CD4-positive, alpha-beta T cell (primary cell): ENCODE measurements at regions of chr3 and their contacts with region 1.

Region 1: DNA sequence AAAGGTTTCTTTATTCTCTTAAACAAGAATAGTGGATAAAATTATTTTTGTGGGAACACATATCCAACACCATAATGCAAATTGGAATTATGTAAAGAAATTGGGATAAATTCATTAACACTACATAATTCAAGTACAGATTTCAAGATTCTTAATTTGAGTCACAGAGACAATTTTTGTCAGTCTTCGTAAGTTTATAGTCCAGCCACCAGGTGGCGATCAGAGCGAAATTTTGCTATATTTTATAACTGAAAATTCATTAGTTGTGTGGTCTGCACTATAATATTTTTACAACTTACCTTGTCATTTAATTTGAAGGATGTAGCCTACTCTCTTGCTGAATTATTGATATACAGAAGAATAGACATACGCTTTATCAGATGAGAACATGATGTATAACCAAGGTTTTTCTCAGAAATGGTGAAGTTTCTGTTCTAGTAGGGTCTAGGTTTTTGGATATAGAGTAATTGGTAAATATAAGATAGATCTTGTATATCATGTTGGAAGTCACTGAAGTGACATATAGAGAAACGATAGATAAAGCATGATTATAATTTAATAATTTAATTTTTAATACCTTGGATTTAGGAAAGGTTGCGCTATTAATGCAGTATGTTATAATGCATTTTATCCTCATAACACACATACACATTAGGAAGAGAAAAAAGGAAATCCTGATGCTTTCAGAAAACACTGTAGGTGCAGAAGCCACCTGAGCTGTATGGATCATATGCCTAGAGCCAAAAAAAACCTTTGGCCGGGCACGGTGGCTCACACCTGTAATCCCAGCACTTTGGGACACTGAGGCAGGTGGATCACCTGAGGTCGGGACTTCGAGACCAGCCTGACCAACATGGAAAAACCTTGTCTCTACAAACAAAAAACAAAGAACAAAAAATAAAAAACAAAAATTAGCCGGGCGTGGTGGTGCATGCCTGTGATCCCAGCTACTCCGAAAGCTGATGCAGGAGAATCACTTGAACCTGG is 31.7 kb downstream of the PLSCR4 start:
- DNase-seq: peak; percentile 6 to 57 (median 16)
- ATAC-seq: no peak
- H3K4me3 ChIP-seq: no peak overlapping the region
- H3K4me3 Mint-ChIP-seq: no peak overlapping the region
- H3K27ac ChIP-seq: no peak overlapping the region
- H3K27ac Mint-ChIP-seq: no peak overlapping the region
- H3K4me1 ChIP-seq: no peaks in the 10 kb centered on the region
- H3K4me1 Mint-ChIP-seq: no peaks in the 10 kb centered on the region
- H3K27me3 ChIP-seq: no peaks in the 10 kb centered on the region
- H3K27me3 Mint-ChIP-seq: no peaks in the 10 kb centered on the region
- CTCF ChIP-seq: peak; percentile 78

Region 2: GRCh38 chr3:146233487-146233886 is 14.3 kb after region 1 on chr3:
- CTCF ChIA-PET with region 1: no interaction called
- POLR2A ChIA-PET with region 1: no interaction called
- intact Hi-C with region 1: no loop called
- DNase-seq: no peak
- ATAC-seq: no peak
- H3K4me3 ChIP-seq: no peak overlapping the region
- H3K4me3 Mint-ChIP-seq: no peak overlapping the region
- H3K27ac ChIP-seq: no peak overlapping the region
- H3K27ac Mint-ChIP-seq: no peak overlapping the region
- H3K4me1 ChIP-seq: no peaks in the 10 kb centered on the region
- H3K4me1 Mint-ChIP-seq: no peaks in the 10 kb centered on the region
- H3K27me3 ChIP-seq: no peaks in the 10 kb centered on the region
- H3K27me3 Mint-ChIP-seq: peaks cover 5% of the 10 kb centered on the region
- CTCF ChIP-seq: no peak

Region 3: GRCh38 chr3:146640955-146641867 is 422.0 kb after region 1 on chr3:
- CTCF ChIA-PET with region 1: no interaction called
- POLR2A ChIA-PET with region 1: no interaction called
- intact Hi-C with region 1: loop called in 1 of 2 experiments (anchors 5 kb)
- DNase-seq: peak in 3 of 14 experiments; percentile 25 to 31 (median 27)
- ATAC-seq: peak; percentile 39
- H3K4me3 ChIP-seq: no peak overlapping the region
- H3K4me3 Mint-ChIP-seq: no peak overlapping the region
- H3K27ac ChIP-seq: no peak overlapping the region
- H3K27ac Mint-ChIP-seq: no peak overlapping the region
- H3K4me1 ChIP-seq: no peaks in the 10 kb centered on the region
- H3K4me1 Mint-ChIP-seq: no peaks in the 10 kb centered on the region
- H3K27me3 ChIP-seq: no peaks in the 10 kb centered on the region
- H3K27me3 Mint-ChIP-seq: no peaks in the 10 kb centered on the region
- CTCF ChIP-seq: peak; percentile 22